PC-9 (cell line): ENCODE measurements at regions of chr5 and their contacts with region 1.

Region 1: DNA sequence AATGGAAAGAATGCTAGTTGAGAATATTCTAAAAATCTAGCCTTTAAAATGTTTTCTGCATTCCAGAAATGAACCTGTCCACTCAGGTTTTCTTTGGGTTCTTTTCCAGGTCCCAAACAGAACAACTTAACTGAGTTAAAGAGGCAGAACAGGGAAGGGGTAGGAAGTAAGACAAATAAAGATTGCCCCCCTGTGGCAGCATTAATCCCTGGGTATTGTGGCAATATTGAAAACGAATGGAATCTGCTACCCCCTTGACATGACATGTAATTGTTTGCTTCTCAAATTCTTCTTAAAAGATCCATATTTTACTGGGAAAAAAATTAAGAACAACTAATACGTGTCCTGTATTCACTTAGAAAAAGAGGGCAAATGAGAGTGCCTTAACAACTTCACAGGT is 9.3 kb upstream of the RBM22 start:
- DNase-seq: no peak
- H3K4me3 ChIP-seq: no peak overlapping the region
- H3K27ac ChIP-seq: no peak overlapping the region
- H3K4me1 ChIP-seq: no peaks in the 10 kb centered on the region
- H3K27me3 ChIP-seq: no peaks in the 10 kb centered on the region
- CTCF ChIP-seq: peak; percentile 51

Region 2: GRCh38 chr5:150640311-150641005 is 69.7 kb before region 1 on chr5 and contains the start of gene SYNPO:
- CTCF ChIA-PET with region 1: no interaction called
- POLR2A ChIA-PET with region 1: no interaction called
- intact Hi-C with region 1: no loop called
- DNase-seq: peak; percentile 70 to 87
- H3K4me3 ChIP-seq: peak within 1 kb of the TSS; percentile 42; the same call in 1 of the 2 replicates
- H3K27ac ChIP-seq: peak within 1 kb of the TSS; percentile 62
- H3K4me1 ChIP-seq: peaks cover 91% of the 10 kb centered on the region
- H3K27me3 ChIP-seq: no peaks in the 10 kb centered on the region
- CTCF ChIP-seq: no peak
- total RNA-seq, gene SYNPO: 1.8 and 2.0 TPM in 2 replicates

Region 3: DNA sequence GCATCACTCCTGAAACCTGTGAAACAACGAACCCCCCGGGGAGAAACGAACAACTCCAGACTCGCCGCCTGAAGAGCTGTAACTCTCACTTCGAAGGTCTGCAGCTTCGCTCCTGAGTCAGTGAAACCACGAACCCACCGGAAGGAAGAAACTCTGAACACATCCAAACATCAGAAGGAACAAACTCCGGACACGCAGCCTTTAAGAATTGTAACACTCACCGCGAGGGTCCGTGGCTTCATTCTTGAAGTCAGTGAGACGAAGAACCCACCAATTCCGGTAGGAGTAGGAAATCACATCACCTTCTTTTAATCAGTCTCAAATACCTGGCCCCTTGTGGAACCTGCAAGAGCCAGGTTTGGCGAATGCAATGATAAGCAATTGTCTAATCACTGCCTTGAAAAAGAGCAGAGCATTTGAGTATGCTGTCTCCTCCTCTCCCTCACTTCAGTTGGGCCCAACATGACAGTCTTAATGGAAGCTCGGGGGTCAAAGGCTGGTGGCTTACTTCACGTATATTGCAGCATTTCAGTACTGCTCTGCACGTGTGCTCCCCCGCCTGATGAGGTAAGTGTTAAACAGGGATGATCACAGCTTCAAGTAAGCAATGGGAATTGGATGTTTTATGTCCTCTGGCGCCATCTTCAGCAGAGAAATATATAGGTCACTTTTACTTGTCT is 136.6 kb after region 1 on chr5:
- CTCF ChIA-PET with region 1: interaction called, 3 read pairs
- POLR2A ChIA-PET with region 1: no interaction called
- intact Hi-C with region 1: loop called (anchors 10 kb)
- DNase-seq: peak; percentile 38 to 63
- H3K4me3 ChIP-seq: no peak overlapping the region
- H3K27ac ChIP-seq: no peak overlapping the region
- H3K4me1 ChIP-seq: no peaks in the 10 kb centered on the region
- H3K27me3 ChIP-seq: peaks cover 2% of the 10 kb centered on the region; the same call in 1 of the 2 replicates
- CTCF ChIP-seq: peak; percentile 79

Region 4: GRCh38 chr5:151758430-151759241 is 1048.5 kb after region 1 on chr5 and contains the start of gene ATOX1:
- CTCF ChIA-PET with region 1: interaction called, 12 read pairs
- POLR2A ChIA-PET with region 1: no interaction called
- intact Hi-C with region 1: no loop called
- DNase-seq: peak; percentile 65 to 95
- H3K4me3 ChIP-seq: peak within 1 kb of the TSS; percentile 97
- H3K27ac ChIP-seq: 0 out of 2 replicates have a peak within 1 kb of the TSS, but pooled peaks have one; percentile 24
- H3K4me1 ChIP-seq: peaks cover 16% of the 10 kb centered on the region
- H3K27me3 ChIP-seq: no peaks in the 10 kb centered on the region
- CTCF ChIP-seq: no peak
- total RNA-seq, gene ATOX1: 175 and 201 TPM in 2 replicates